Activated naive CD4-positive, alpha-beta T cell treated with anti-CD3 and anti-CD28 coated beads, Interleukin-2, amount 10 ng/mL, durations not matched to agents 7 days and 5 days (primary cell): ENCODE measurements at regions of chr7 and their contacts with region 1.

Region 1: GRCh38 chr7:36318116-36318515 is 71.5 kb upstream of the ANLN start:
- DNase-seq: no peak
- H3K4me3 Mint-ChIP-seq: no peak overlapping the region
- H3K27ac Mint-ChIP-seq: no peak overlapping the region
- H3K4me1 Mint-ChIP-seq: peaks cover 2% of the 10 kb centered on the region
- H3K27me3 Mint-ChIP-seq: peaks cover 19% of the 10 kb centered on the region

Region 2: GRCh38 chr7:35985126-35985754 is 332.9 kb before region 1 on chr7:
- CTCF ChIA-PET with region 1: interaction called, 45 read pairs
- DNase-seq: peak; percentile 83
- H3K4me3 Mint-ChIP-seq: no peak overlapping the region
- H3K27ac Mint-ChIP-seq: no peak overlapping the region
- H3K4me1 Mint-ChIP-seq: no peaks in the 10 kb centered on the region
- H3K27me3 Mint-ChIP-seq: peaks cover 10% of the 10 kb centered on the region

Region 3: DNA sequence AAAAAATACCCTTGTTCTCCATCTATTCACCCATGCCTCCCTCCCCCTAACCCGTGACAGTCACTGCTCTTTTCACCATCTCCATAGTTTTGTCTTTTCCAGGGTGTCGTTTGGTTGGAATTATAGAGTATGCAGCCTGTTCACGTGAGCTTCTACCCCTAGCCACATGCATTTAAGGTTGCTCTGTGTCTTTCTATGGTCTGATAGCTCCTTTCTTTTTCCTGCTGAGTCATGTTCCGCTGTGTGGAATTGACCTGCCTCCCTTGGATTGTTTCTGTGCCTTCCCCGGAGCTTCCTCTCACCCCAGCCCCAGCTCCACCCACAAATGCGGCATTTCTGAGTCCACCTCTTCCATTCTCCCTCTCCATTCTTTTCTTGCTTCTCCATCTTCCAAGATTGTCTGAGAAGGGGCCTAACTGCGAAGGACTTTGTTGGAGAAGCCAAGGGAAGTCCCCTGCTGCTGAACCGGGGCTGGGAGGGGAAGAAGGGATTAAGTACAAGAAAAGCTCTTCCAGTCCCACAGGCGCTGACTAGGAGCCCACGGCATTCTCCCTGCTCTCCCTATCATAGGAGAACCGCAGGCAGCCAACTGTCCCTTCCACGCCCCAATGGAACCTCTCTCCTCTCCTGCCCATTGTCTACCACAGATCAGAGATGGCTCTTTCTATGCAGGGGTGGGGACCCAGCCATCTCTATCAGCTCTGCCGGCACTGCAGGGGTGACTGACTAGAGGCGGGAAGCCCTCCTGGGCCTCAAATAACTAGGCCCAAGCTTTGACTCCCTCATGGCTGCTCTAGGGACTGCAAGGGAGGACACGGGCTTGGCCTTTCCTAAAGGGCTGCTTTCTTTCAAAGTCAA is 16.0 kb before region 1 on chr7:
- CTCF ChIA-PET with region 1: interaction called, 15 read pairs
- DNase-seq: no peak
- H3K4me3 Mint-ChIP-seq: no peak overlapping the region
- H3K27ac Mint-ChIP-seq: no peak overlapping the region
- H3K4me1 Mint-ChIP-seq: no peaks in the 10 kb centered on the region
- H3K27me3 Mint-ChIP-seq: no peaks in the 10 kb centered on the region

Region 4: GRCh38 chr7:36439624-36440023 is 121.5 kb after region 1 on chr7:
- CTCF ChIA-PET with region 1: no interaction called
- DNase-seq: no peak
- H3K4me3 Mint-ChIP-seq: no peak overlapping the region
- H3K27ac Mint-ChIP-seq: no peak overlapping the region
- H3K4me1 Mint-ChIP-seq: no peaks in the 10 kb centered on the region
- H3K27me3 Mint-ChIP-seq: no peaks in the 10 kb centered on the region